ENCODE measurements at regions of chr11 and their contacts with region 1.

Region 1: DNA sequence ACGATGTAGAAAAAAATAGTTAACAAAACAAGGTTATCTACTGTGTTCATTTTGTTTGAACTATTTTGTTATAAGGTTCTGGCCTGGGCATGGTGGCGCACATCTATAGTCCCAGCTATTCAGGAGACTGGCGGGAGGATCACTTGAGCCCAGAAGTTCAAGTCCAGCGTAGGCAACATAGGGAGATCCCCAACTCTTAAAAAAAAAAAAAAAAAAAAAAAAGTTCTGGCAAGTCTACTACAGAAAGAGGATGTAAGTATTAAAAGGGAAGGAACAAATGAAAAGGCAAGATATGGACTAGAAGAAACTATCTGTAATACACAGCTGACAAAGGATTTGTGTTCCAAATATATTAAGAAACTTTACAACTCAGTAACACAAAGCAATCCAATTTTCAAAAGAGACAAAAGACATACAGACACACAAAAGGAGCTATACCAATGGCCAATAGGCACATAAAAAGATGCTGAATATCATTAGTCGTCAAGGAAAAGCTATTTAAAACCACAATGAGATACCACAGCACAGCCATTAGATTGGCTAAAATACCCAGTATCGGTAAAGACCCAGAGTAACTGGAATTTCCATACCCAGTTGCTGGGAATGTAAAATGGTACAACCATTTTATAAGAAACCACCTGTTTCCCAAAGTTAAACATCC is 27.4 kb downstream of the RRAS2 start:
- DNase-seq: no peak
- H3K4me3 ChIP-seq: no peak overlapping the region
- H3K27ac ChIP-seq: no peak overlapping the region
- H3K4me1 ChIP-seq: peaks cover 8% of the 10 kb centered on the region
- H3K27me3 ChIP-seq: no peaks in the 10 kb centered on the region
- CTCF ChIP-seq: no peak

Region 2: GRCh38 chr11:14789879-14790484 is 458.4 kb after region 1 on chr11:
- CTCF ChIA-PET with region 1: no interaction called
- POLR2A ChIA-PET with region 1: interaction called, 11 read pairs
- intact Hi-C with region 1: no loop called
- DNase-seq: peak; percentile 22
- H3K4me3 ChIP-seq: no peak overlapping the region
- H3K27ac ChIP-seq: no peak overlapping the region
- H3K4me1 ChIP-seq: peaks cover 17% of the 10 kb centered on the region
- H3K27me3 ChIP-seq: no peaks in the 10 kb centered on the region
- CTCF ChIP-seq: peak; percentile 67

Region 3: GRCh38 chr11:15406851-15407351 is 1075.3 kb after region 1 on chr11:
- CTCF ChIA-PET with region 1: no interaction called
- POLR2A ChIA-PET with region 1: interaction called, 13 read pairs
- intact Hi-C with region 1: no loop called
- DNase-seq: no peak
- H3K4me3 ChIP-seq: no peak overlapping the region
- H3K27ac ChIP-seq: no peak overlapping the region
- H3K4me1 ChIP-seq: no peaks in the 10 kb centered on the region
- H3K27me3 ChIP-seq: no peaks in the 10 kb centered on the region
- CTCF ChIP-seq: no peak